ENCODE measurements at regions of chr20 and their contacts with region 1.

Region 1: DNA sequence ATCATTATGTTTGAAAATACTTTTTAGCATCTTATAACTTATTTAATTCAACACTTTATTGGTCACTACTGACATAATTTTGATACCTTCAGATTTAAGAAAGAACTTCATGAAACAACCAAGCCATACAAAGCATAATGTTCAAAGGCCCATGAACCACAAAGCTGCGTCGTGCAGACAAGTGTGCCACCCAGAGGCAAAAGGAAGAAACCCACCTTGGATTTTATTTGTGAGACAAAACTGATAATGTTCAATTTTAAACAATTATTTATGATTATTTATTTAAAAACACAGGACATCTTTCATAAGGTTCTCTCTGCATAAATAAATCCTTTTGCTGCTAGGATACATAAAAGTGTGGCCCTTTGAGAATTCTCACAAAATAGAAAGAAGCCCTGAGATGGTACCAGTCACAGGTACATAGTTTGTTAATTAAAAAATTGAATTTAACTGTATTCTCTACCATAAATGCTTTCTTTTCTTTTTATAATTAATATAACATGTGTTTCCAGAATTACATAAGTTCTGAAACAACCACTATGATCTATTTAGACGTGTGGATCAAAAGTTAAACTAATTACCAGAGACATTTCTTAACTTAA is 143.7 kb downstream of the RALGAPA2 start:
- DNase-seq: no peak
- H3K4me3 ChIP-seq: no peak overlapping the region
- H3K27ac ChIP-seq: no peak overlapping the region
- H3K4me1 ChIP-seq: no peaks in the 10 kb centered on the region
- H3K27me3 ChIP-seq: no peaks in the 10 kb centered on the region
- CTCF ChIP-seq: peak; percentile 56 to 70 (median 60)
- EP300 ChIP-seq: no peak
- POLR2A ChIP-seq: no peak

Region 2: GRCh38 chr20:20360464-20360863 is 208.2 kb before region 1 on chr20:
- in situ Hi-C with region 1: loop called in 3 of 4 experiments (anchors 25 kb)
- intact Hi-C with region 1: loop called (anchors 10 kb)
- DNase-seq: peak; percentile 54
- H3K4me3 ChIP-seq: no peak overlapping the region
- H3K27ac ChIP-seq: no peak overlapping the region
- H3K4me1 ChIP-seq: peaks cover 6 to 26% (median 15%) of the 10 kb centered on the region in 4 donors
- H3K27me3 ChIP-seq: peaks cover 71% of the 10 kb centered on the region
- CTCF ChIP-seq: peak; percentile 72 to 86 (median 80)
- EP300 ChIP-seq: no peak
- POLR2A ChIP-seq: no peak

Region 3: GRCh38 chr20:20536240-20536933 is 32.3 kb before region 1 on chr20:
- in situ Hi-C with region 1: no loop called
- intact Hi-C with region 1: no loop called
- DNase-seq: no peak
- H3K4me3 ChIP-seq: no peak overlapping the region
- H3K27ac ChIP-seq: peak overlapping the region in 1 of 4 donors; percentile 24
- H3K4me1 ChIP-seq: peaks cover 0 to 16% (median 6%) of the 10 kb centered on the region in 4 donors
- H3K27me3 ChIP-seq: no peaks in the 10 kb centered on the region
- CTCF ChIP-seq: no peak
- EP300 ChIP-seq: no peak
- POLR2A ChIP-seq: no peak

Measured in transverse colon (tissue), 4 donors.